AG04449 (cell line): ENCODE measurements at regions of chr5 and their contacts with region 1.

Region 1: DNA sequence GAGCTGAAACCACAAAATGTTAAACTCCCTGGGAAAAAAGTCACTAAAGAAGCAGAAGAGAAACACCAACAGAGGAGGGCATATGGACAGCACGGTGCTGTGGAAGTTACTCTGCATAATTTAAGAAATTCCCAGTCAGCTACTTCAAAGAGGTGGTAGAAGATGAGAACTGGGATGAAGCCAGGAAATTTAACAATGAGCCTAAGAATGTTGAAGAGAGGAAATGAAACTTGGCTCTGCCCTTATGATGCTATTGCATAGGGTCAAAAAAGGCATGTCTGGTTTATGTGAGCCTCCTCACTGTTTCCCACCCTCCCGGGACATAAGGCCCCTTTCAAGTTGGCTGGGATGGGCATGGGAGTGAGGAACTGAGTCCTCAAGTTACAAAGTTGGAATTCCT is 25.4 kb upstream of the SNX18 start:
- DNase-seq: no peak
- H3K4me3 ChIP-seq: no peak overlapping the region
- CTCF ChIP-seq: no peak

Region 2: GRCh38 chr5:54109626-54110330 is 382.4 kb before region 1 on chr5:
- CTCF ChIA-PET with region 1: no interaction called
- POLR2A ChIA-PET with region 1: no interaction called
- DNase-seq: no peak
- H3K4me3 ChIP-seq: no peak overlapping the region
- CTCF ChIP-seq: no peak

Region 3: DNA sequence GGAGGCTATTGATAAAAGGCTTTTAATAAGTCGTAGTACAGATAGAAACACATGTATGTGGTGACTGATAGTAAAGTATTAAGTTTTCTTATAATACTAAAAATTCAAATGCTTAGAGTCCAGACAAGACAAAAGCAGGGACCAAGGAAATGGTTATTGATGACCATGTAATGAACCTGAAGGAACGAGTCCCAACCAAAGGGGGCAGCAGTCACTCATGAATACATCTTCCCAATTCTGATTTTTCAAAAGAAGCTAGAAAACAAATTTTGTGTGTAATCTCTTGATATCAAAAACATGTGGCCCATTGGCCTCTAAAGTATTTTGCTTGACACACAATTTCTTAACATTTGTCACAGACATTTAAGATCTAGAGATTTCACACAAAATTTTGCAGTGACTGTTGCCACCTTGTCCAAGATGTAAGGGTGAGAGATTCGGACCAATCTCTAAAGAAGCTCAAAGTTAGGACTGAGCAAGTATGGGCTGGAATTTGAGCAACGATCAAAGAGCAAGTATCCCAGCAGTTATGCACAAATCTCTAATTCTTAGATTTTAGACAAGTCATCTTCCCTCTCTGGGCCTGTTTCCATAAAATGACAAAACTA is 248.6 kb before region 1 on chr5:
- CTCF ChIA-PET with region 1: interaction called, 190 read pairs
- POLR2A ChIA-PET with region 1: no interaction called
- DNase-seq: no peak
- H3K4me3 ChIP-seq: no peak overlapping the region
- CTCF ChIP-seq: peak; percentile 53

Region 4: GRCh38 chr5:54310433-54311175 is 181.6 kb before region 1 on chr5 and contains the start of gene ARL15:
- CTCF ChIA-PET with region 1: interaction called, 45 read pairs
- POLR2A ChIA-PET with region 1: interaction called, 7 read pairs
- DNase-seq: peak; percentile 73
- H3K4me3 ChIP-seq: peak within 1 kb of the TSS; percentile 83
- CTCF ChIP-seq: no peak

Region 5: DNA sequence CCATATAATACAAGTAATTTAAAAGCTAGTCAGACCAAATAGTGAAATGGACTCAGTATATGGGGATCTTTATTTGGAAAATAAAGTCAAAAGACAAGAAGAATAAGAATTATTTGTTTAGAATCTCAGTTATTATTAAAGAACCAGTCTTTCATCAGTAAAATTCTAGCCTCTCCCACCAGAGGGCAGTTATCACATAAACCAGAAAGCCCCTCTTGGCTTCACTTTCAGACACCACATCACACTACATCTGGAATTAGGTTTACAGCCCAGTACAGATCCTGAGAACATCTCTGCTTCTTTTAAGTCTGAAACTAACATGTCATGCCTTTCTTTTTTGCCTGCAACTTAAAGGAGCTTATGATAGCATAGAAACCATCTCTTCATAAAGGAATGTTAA is 48.9 kb before region 1 on chr5:
- CTCF ChIA-PET with region 1: interaction called, 250 read pairs
- POLR2A ChIA-PET with region 1: no interaction called
- DNase-seq: no peak
- H3K4me3 ChIP-seq: no peak overlapping the region
- CTCF ChIP-seq: peak; percentile 35

Region 6: GRCh38 chr5:54480296-54480695 is 11.9 kb before region 1 on chr5:
- CTCF ChIA-PET with region 1: interaction called, 43 read pairs
- POLR2A ChIA-PET with region 1: no interaction called
- DNase-seq: no peak
- H3K4me3 ChIP-seq: no peak overlapping the region
- CTCF ChIP-seq: no peak

Region 7: DNA sequence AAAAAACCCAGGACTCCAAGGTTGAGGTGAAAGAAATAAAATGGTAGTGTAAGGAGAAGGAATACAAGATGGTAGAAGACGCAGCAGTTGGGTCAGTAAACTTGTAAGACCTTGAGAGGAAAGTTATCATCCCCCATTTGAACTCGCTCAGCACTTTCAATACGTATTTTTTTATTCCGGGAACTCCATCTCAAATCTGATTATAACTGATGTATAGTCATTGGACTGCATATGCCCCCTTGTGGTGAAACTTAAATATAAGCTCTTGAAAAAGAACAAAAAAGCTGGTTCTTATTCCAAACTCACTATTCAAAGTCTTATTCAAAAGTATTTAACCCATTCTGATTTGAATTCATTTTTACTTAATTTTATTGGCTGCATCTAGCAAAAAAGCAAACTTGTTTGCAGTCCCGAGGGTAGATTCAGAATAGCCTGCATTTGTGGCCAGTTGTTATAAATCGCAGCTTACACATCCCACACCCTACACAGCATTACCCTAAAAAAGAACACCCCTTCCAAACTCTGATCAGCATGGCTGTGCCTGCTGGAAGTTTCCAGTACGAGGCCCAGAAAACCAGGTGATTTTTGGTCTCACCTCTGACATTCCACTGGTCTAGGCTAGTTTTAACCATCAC is 375.2 kb after region 1 on chr5:
- CTCF ChIA-PET with region 1: interaction called, 39 read pairs
- POLR2A ChIA-PET with region 1: no interaction called
- DNase-seq: no peak
- H3K4me3 ChIP-seq: no peak overlapping the region
- CTCF ChIP-seq: peak; percentile 9

Region 8: GRCh38 chr5:54895816-54896341 is 403.7 kb after region 1 on chr5:
- CTCF ChIA-PET with region 1: interaction called, 33 read pairs
- POLR2A ChIA-PET with region 1: no interaction called
- DNase-seq: no peak
- H3K4me3 ChIP-seq: no peak overlapping the region
- CTCF ChIP-seq: peak; percentile 49